ENCODE measurements at regions of chr1 and their contacts with region 1.

Region 1: DNA sequence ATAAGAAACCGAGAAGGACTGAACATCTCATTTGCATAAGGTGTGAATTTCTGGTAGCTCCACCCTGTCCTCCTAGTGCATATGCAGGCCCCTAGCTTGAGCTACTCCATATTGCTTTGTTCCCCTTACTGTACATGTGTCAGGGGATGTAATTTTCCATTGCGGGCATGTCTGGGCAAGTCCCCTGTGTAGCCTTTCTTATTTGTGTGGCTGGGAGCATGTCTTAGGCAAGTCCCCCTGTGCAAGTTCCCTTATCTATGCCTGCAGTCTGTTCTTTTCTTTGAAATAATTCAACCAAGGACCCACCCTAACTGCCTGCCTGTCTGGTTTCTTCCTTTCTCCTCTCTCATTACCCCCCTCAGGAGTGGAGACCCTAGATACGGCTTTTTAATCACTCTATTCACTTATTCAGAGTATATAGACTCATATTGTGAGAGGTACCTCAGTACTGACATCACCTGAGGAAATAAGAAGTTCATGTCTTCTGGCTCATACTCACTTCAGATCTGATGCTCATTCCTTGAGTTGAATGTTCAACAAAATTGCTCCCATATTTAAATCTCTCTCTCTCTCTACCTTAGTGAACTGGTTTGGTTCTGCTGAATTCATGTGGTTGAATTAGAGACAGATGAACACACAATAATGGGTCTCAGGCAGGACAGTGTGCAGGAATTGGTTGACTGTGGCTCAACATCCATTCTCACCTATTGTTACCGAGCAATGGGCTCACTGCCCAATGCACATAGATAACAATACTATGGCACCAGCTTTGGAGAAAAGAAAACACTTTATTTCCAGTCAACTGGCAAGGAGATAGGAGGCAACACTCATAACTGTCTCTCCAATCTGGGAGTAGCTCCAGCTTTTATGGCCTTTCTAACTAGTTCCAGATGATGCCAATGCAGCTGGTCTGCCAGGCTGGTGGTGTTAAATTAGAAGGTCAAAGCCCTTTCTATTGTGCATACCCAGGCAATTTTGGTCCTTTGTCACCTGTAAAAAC is 27.9 kb upstream of the NPL start:
- DNase-seq: no peak
- H3K4me3 ChIP-seq: no peak overlapping the region
- H3K27ac ChIP-seq: no peak overlapping the region
- H3K4me1 ChIP-seq: no peaks in the 10 kb centered on the region
- H3K27me3 ChIP-seq: no peaks in the 10 kb centered on the region
- CTCF ChIP-seq: no peak

Region 2: DNA sequence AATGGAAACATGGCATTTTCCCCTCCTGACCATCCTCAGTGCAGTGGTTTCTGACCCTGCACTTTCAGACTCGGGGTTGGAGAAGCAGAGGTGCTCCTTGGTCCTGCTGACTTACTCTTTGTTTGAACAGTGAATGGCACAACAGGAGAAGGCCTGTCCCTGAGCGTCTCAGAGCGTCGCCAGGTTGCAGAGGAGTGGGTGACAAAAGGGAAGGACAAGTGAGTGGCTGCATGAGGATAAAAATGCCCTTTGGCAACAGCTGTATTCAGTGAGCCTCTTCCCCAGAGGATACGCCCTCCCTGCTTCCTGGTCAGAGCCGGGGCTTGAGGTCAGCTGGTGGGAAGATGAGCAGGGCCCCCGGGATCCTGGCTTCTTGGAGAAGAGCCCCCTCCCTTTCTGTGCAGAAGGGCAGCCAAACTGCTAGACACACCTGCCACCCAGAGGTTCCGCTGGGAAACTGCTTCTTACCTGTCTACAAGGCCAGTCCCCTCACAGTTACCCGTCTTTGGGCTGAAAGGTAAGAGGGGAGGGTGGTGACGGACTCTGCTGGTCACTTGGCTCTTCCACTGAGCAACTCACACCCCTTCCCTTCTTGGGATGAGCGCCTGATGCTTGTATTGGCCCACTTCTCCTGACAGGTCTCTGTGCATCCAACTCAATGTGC is 44.5 kb after region 1 on chr1:
- CTCF ChIA-PET with region 1: no interaction called
- POLR2A ChIA-PET with region 1: interaction called, 14 read pairs
- intact Hi-C with region 1: no loop called
- DNase-seq: no peak
- H3K4me3 ChIP-seq: no peak overlapping the region
- H3K27ac ChIP-seq: no peak overlapping the region
- H3K4me1 ChIP-seq: no peaks in the 10 kb centered on the region
- H3K27me3 ChIP-seq: no peaks in the 10 kb centered on the region
- CTCF ChIP-seq: 0 out of 2 replicates have a peak, but pooled peaks have one; percentile 9

Measured in A673 (cell line).